Mammary epithelial cell (primary cell): ENCODE measurements at regions of chr4 and their contacts with region 1.

Region 1: DNA sequence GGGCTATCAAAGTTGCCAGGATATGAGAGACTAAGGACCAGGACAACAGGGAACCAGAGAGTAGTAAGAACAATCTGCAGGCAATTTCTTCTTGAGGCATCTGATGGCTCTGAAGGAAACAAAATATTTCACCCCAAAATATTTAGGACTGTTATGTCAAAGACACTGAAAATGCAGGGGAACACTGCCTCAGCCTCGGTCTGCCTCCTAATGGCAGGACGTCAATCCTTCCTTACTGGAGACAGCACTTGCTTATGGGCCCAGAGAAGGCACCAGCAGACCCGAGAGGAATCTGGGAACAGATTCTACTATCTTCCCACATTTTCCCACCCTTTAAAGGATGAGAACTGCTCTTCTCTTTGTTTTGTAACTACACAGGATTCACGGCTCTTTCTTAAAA is 23.3 kb downstream of the RNF150 start:
- DNase-seq: no peak
- H3K4me3 ChIP-seq: no peak overlapping the region
- H3K27ac ChIP-seq: no peak overlapping the region
- H3K4me1 ChIP-seq: no peaks in the 10 kb centered on the region
- H3K27me3 ChIP-seq: no peaks in the 10 kb centered on the region
- CTCF ChIP-seq: no peak

Region 2: GRCh38 chr4:141028024-141028529 is 81.9 kb before region 1 on chr4:
- CTCF ChIA-PET with region 1: no interaction called
- dilution Hi-C with region 1: loop called (anchors 5 kb)
- in situ Hi-C with region 1: no loop called
- intact Hi-C with region 1: no loop called
- DNase-seq: peak; percentile 8
- H3K4me3 ChIP-seq: no peak overlapping the region
- H3K27ac ChIP-seq: no peak overlapping the region
- H3K4me1 ChIP-seq: no peaks in the 10 kb centered on the region
- H3K27me3 ChIP-seq: no peaks in the 10 kb centered on the region
- CTCF ChIP-seq: no peak